Dorsolateral prefrontal cortex (tissue), 120 donors: ENCODE measurements at regions of chr9 and their contacts with region 1.

Region 1: GRCh38 chr9:37449862-37450632 is 15.2 kb downstream of the ZBTB5 start:
- DNase-seq: peak in 8 of 10 donors; percentile 52 to 84 (median 68)
- H3K4me3 ChIP-seq: peak overlapping the region in 26 of 59 donors; percentile 0 to 37 (median 20)
- H3K27ac ChIP-seq: peak overlapping the region in 57 of 59 donors; percentile 11 to 88 (median 77)
- H3K27me3 ChIP-seq: no peaks in the 10 kb centered on the region
- CTCF ChIP-seq: peak in 47 of 56 donors; percentile 12 to 71 (median 45)

Region 2: GRCh38 chr9:37283730-37284325 is 166.2 kb before region 1 on chr9:
- intact Hi-C with region 1: no loop called
- DNase-seq: no peak
- H3K4me3 ChIP-seq: no peak overlapping the region
- H3K27ac ChIP-seq: no peak overlapping the region
- H3K27me3 ChIP-seq: no peaks in the 10 kb centered on the region
- CTCF ChIP-seq: no peak

Region 3: GRCh38 chr9:37415011-37415719 is 34.9 kb before region 1 on chr9:
- intact Hi-C with region 1: loop called in 1 of 2 experiments (anchors 2 kb)
- DNase-seq: peak in 9 of 10 donors; percentile 45 to 80 (median 74)
- H3K4me3 ChIP-seq: peak overlapping the region in 15 of 59 donors; percentile 0 to 38 (median 19)
- H3K27ac ChIP-seq: peak overlapping the region in 57 of 59 donors; percentile 8 to 89 (median 75)
- H3K27me3 ChIP-seq: no peaks in the 10 kb centered on the region
- CTCF ChIP-seq: peak; percentile 71 to 97 (median 90)